Gastrocnemius medialis (tissue), 4 donors: ENCODE measurements at regions of chr6 and their contacts with region 1.

Region 1: DNA sequence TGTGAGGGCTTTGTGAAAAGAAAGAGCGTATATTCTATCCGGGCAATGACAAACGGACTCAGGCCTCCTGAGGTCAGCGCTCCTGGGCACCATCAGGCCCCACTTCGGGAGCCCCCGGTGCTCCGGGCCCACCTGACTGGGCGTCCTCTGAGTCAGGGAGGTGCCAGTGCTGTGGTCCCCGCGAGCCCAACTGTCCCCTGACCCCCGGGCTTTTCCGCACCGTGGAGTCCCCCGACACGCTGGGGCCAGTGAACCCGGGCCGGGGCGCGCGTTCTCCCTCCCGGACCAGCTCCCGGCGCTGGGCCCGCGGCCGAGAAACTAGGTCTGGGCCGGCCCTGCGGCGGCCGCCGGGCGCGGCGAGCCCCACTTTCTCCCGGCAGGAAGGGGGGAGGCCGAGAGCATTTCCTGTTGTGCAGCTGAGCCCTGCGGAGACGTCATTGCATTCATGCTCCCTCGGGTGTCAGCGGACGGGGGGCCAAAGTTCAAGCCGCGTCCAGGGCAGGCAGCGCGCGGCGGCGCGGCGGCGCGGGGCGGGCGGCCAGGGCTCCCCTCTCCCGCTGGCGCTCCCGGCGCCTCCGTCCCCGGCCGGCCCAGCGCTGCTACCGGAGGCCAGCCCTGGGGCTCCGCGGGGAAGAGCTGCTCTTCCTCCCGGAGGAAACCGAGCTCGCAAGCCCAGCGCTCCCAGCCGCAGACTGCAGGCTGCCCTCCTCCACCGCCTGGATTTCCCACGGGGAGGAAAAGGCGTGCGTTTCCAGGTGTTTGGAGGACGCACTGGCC is 18.3 kb downstream of the HIVEP2 start:
- DNase-seq: peak; percentile 77 to 83
- ATAC-seq: peak; percentile 87 to 89
- H3K4me3 ChIP-seq: peak overlapping the region; percentile 66 to 75 (median 68)
- H3K27ac ChIP-seq: peak overlapping the region; percentile 88 to 95 (median 94)
- H3K4me1 ChIP-seq: peaks cover 44 to 49% of the 10 kb centered on the region in 2 donors
- H3K27me3 ChIP-seq: no peaks in the 10 kb centered on the region
- CTCF ChIP-seq: no peak
- POLR2A ChIP-seq: peak; percentile 64 to 78

Region 2: DNA sequence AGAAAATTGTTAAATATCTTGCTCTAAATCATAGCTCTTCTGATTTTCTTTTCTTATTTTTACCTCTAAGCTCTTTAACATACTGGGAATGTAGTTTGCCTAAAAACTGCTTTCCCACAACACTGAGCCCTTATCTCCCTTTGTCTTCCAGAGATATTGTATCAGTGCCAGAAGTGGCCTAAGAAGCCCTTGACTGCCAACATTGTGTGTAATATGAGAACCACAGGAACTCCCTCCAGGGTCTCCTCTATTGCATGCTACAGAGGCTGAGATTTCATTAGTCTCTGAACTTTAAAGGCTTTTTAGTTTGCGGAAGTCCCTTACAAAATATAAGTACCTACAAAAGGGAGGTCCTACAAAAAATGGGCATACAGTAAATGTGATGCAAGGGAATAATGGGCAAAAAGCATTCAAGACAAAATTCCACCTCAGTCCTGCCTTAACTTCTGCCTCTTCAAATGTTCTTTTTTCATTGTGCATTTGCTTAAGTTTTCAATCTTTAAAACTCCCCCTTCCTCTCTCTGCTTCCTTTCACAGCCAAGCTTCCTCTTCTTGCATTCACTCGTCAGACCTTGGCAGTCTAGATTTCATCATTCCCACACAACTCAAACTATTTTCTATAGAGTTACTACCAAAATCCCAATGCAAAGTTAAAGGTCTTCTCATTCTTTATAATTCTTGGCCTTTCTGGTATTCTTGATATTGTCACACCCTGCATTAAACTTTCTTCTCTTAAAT is 548.4 kb before region 1 on chr6:
- in situ Hi-C with region 1: no loop called
- intact Hi-C with region 1: no loop called
- DNase-seq: no peak
- ATAC-seq: peak in 1 of 2 donors; percentile 33
- H3K4me3 ChIP-seq: no peak overlapping the region
- H3K27ac ChIP-seq: no peak overlapping the region
- H3K4me1 ChIP-seq: no peaks in the 10 kb centered on the region
- H3K27me3 ChIP-seq: no peaks in the 10 kb centered on the region
- CTCF ChIP-seq: no peak
- POLR2A ChIP-seq: no peak

Region 3: DNA sequence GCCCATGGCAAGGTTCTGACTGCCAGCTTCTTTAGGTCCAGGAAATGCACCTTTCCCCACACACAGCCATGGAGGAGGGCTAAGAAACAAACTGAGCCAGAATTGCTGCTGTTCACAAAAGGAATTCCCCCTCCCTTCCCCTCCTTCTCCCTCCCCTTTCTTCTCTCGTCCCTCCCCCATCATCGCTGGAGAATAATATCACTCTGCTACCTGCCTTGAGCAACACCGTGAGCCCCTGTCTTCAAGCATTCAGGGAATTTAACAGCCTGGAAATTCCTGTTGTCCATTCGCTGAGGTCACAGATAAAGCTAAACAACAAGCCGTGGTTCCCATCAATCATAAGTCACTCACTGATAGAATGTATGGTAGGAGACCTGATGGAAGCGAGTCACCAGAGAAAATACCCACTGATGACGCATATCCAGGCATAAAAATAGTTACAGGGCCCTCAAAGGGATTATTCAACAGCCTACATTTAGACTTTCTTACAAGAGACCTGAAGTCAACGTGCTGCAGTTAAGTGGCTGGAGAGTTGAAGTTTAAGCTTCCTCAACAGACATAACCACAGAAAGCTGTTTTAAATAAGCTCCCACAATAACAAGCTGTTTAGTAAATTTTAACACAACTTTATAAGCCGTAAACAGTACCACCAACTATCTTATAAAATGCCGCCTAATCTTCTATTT is 41.4 kb before region 1 on chr6:
- in situ Hi-C with region 1: no loop called
- intact Hi-C with region 1: loop called (anchors 5 kb)
- DNase-seq: peak; percentile 48 to 53
- ATAC-seq: peak; percentile 94 to 97
- H3K4me3 ChIP-seq: peak overlapping the region; percentile 38 to 54 (median 47)
- H3K27ac ChIP-seq: peak overlapping the region; percentile 81 to 93 (median 84)
- H3K4me1 ChIP-seq: peaks cover 61 to 71% of the 10 kb centered on the region in 2 donors
- H3K27me3 ChIP-seq: no peaks in the 10 kb centered on the region
- CTCF ChIP-seq: no peak
- POLR2A ChIP-seq: peak; percentile 55 to 80